Calu3 (cell line): ENCODE measurements at regions of chr10 and their contacts with region 1.

Region 1: GRCh38 chr10:4283846-4284610 is 499.0 kb upstream of the KLF6 start:
- DNase-seq: no peak
- H3K4me3 Mint-ChIP-seq: no peak overlapping the region
- H3K27ac Mint-ChIP-seq: no peak overlapping the region
- H3K4me1 Mint-ChIP-seq: peaks cover 34% of the 10 kb centered on the region
- H3K27me3 Mint-ChIP-seq: no peaks in the 10 kb centered on the region
- CTCF ChIP-seq: no peak

Region 2: DNA sequence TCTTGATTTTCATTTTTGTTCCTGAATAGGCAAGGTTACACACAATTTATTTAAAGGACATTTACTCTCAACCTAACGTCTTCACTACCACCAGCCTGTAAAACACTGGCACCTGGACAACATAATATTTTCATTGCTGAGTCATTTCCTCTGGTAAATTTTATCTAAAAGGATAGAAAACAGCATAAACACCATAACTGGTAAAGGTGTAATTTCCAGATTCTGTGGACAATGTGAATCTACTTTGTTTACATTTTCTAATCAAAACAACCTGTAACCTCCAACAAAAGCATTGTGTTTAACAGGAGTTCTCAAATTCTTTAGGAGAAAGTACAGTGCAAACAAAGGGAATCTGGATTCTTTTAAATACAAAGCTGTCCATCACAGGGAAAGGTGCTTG is 69.9 kb after region 1 on chr10:
- CTCF ChIA-PET with region 1: no interaction called
- intact Hi-C with region 1: loop called (anchors 5 kb)
- DNase-seq: peak; percentile 9
- H3K4me3 Mint-ChIP-seq: peak overlapping the region; percentile 18
- H3K27ac Mint-ChIP-seq: peak overlapping the region; percentile 84
- H3K4me1 Mint-ChIP-seq: peaks cover 54% of the 10 kb centered on the region
- H3K27me3 Mint-ChIP-seq: no peaks in the 10 kb centered on the region
- CTCF ChIP-seq: no peak